ENCODE measurements at regions of chr10 and their contacts with region 1.

Region 1: GRCh38 chr10:122435212-122435827 is 19.1 kb upstream of the ARMS2 start:
- DNase-seq: no peak
- H3K4me3 ChIP-seq: no peak overlapping the region
- H3K27ac ChIP-seq: no peak overlapping the region
- H3K4me1 ChIP-seq: no peaks in the 10 kb centered on the region
- H3K27me3 ChIP-seq: no peaks in the 10 kb centered on the region
- CTCF ChIP-seq: peak in 3 of 4 experiments; percentile 79 to 86 (median 80)
- POLR2A ChIP-seq: no peak

Region 2: DNA sequence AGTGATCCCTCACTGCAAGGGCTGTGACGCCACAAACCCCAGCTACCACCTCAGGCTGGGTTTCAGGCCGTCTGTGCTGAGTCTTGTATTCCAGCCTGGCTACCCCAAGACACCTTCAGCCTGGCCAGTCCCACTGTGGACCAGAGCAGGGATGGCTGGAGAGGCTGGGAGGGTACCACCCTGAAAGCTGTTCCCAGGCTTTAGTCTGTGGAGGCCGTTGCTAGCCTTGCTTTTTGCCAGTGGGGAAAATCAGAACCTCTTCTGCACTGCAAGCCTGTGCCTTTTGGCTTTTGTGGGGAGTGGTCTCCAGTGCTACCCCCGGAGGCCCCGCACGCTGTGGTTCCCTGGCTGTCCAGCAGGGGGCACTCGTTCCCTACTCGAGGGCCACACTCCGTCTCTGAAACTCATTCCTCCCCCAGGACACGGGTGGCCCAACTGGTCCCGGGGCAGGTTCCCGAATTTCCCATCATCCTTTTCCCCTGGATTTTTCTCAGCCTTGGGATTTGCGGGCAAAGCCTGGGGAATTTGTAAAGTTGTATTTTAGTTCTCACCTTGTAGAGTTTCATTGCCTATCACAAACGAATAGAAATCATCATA is 292.6 kb before region 1 on chr10:
- intact Hi-C with region 1: loop called (anchors 10 kb)
- DNase-seq: no peak
- H3K4me3 ChIP-seq: no peak overlapping the region
- H3K27ac ChIP-seq: peak overlapping the region; percentile 79 to 81
- H3K4me1 ChIP-seq: peaks cover 4% of the 10 kb centered on the region
- H3K27me3 ChIP-seq: no peaks in the 10 kb centered on the region
- CTCF ChIP-seq: peak; percentile 85 to 97 (median 90)
- POLR2A ChIP-seq: no peak

Region 3: DNA sequence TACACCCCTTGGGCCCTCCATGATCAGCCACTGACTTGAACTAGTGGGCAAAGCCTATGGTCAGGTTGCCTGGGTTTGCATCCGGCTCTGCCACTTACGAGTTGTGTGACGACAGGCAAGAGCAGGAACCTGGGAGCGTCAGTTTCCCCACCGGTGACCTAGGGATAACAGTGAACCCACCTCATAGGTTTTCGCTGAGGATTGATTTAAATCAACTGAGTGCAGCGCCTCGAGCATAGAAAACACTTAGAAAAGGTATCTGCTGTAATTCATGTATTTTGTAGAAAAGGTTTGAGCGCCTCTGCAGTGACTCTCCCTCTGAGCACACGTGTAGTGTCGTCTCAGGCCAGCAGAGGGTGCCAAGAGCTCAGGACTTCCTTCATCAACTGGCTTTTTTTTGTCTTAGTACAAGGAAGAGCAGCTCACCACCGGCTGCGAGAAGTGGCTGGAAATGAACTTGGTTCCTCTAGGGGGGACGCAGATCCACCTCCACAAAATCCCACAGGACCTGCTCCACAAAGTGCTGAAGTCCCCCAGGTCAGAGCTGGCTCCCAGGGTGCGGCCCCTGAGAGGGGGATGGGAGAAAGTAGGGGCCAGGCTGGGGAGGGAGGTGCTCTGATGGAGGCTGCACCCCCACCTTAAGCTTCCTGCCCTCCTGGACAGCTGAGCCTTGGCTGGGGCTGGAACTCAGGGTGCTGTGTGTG is 136.6 kb before region 1 on chr10:
- intact Hi-C with region 1: loop called (anchors 1 kb)
- DNase-seq: peak; percentile 53
- H3K4me3 ChIP-seq: no peak overlapping the region
- H3K27ac ChIP-seq: no peak overlapping the region
- H3K4me1 ChIP-seq: no peaks in the 10 kb centered on the region
- H3K27me3 ChIP-seq: no peaks in the 10 kb centered on the region
- CTCF ChIP-seq: peak; percentile 83 to 92 (median 88)
- POLR2A ChIP-seq: no peak

Region 4: DNA sequence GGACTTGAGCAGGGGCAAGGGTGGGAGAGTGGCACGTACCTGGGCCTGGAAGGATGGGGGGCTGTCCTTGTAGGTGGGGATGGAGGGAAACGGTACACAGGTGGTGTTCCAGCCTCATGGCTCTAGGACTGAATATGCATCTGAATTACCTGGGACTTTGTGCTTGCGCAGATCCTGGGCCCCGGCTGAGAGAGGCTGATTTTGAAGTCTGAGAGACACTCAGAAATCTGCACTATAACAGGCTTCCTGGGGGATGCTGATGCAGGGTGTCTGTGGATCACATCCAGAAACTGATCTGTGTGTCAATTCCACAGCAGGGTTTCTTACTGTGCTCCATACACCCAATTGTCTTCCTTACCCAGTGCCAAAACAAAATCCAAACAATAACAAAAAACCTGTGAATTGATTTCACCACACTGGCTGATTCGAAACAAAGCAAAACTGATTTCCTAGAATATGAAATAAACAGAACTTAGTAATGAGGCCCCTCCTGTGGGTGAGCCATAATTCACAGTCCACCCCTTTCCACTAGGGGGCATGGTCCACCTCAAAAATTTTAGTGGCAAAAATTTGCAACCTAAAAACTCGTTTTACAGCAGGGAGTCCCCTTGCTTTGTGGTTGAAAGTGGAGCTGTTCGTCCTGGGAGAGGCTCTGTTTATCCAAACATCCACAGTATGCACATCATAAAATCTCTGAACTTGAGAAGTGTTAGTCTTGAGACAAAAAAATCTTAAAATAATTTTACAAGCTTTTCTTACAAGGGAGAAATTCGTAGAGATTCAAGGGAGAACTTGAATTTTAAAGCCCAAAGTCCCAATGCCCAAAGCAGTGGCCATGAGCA is 92.8 kb before region 1 on chr10:
- intact Hi-C with region 1: loop called (anchors 5 kb)
- DNase-seq: peak; percentile 28
- H3K4me3 ChIP-seq: no peak overlapping the region
- H3K27ac ChIP-seq: no peak overlapping the region
- H3K4me1 ChIP-seq: no peaks in the 10 kb centered on the region
- H3K27me3 ChIP-seq: no peaks in the 10 kb centered on the region
- CTCF ChIP-seq: peak; percentile 60 to 83 (median 80)
- POLR2A ChIP-seq: no peak

Region 5: DNA sequence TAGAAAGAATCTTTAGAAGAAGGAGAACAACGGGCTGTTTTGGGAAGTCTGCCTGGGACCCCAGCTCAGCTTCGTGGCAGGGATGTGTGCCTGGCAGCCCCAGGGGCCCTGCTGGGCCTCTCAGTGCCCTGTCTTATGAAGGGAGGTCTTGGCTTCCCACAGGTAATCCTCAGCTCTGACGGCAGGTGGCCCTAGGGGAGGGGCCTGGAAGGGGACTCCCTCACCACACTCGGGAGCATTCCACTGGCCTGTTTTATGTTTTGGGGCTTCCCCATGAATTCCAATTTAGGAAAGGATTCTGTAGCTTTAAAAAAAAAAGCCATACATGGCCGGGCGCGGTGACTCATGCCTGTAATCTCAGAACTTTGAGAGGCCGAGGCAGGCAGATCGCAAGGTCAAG is 122.2 kb after region 1 on chr10:
- intact Hi-C with region 1: loop called (anchors 5 kb)
- DNase-seq: no peak
- H3K4me3 ChIP-seq: no peak overlapping the region
- H3K27ac ChIP-seq: no peak overlapping the region
- H3K4me1 ChIP-seq: no peaks in the 10 kb centered on the region
- H3K27me3 ChIP-seq: no peaks in the 10 kb centered on the region
- CTCF ChIP-seq: no peak
- POLR2A ChIP-seq: no peak

Measured in prostate gland (tissue), 2 donors.